ENCODE measurements at regions of chr22 and their contacts with region 1.

Region 1: GRCh38 chr22:49960159-49961004 is at the start of gene PIM3:
- DNase-seq: peak; percentile 93
- H3K4me3 Mint-ChIP-seq: peak within 1 kb of the TSS; percentile 90
- H3K27ac Mint-ChIP-seq: peak within 1 kb of the TSS; percentile 95
- H3K4me1 Mint-ChIP-seq: peaks cover 26% of the 10 kb centered on the region
- H3K27me3 Mint-ChIP-seq: no peaks in the 10 kb centered on the region
- total RNA-seq, gene PIM3: 290 and 291 TPM in 2 replicates

Region 2: GRCh38 chr22:50030297-50031188 is 70.2 kb after region 1 on chr22:
- intact Hi-C with region 1: loop called (anchors 1 kb)
- DNase-seq: peak; percentile 76
- H3K4me3 Mint-ChIP-seq: no peak overlapping the region
- H3K27ac Mint-ChIP-seq: no peak overlapping the region
- H3K4me1 Mint-ChIP-seq: peaks cover 8% of the 10 kb centered on the region
- H3K27me3 Mint-ChIP-seq: peaks cover 5% of the 10 kb centered on the region

Region 3: GRCh38 chr22:50530877-50531545 is 570.6 kb after region 1 on chr22:
- intact Hi-C with region 1: loop called (anchors 10 kb)
- DNase-seq: peak; percentile 83
- H3K4me3 Mint-ChIP-seq: peak overlapping the region; percentile 93
- H3K27ac Mint-ChIP-seq: peak overlapping the region; percentile 99
- H3K4me1 Mint-ChIP-seq: peaks cover 48% of the 10 kb centered on the region
- H3K27me3 Mint-ChIP-seq: no peaks in the 10 kb centered on the region

Measured in activated T-helper 1 cell treated with anti-CD3 and anti-CD28 coated beads, Interleukin-12 subunit alpha, Interleukin-12 subunit beta, Interleukin-2, Interleukin-4 antibody, amounts not matched to agents 30 ng/mL and 10 ng/mL and 1 ng/mL, durations not matched to agents 14 hours and 24 hours and 36 hours (primary cell).